B cell (primary cell): ENCODE measurements at regions of chr14 and their contacts with region 1.

Region 1: GRCh38 chr14:23089498-23090253 is 5.3 kb downstream of the ACIN1 start:
- DNase-seq: no peak
- ATAC-seq: no peak
- H3K4me3 ChIP-seq: no peak overlapping the region
- H3K4me3 Mint-ChIP-seq: no peak overlapping the region
- H3K27ac ChIP-seq: no peak overlapping the region
- H3K27ac Mint-ChIP-seq: no peak overlapping the region
- H3K4me1 ChIP-seq: peaks cover 12 to 13% of the 10 kb centered on the region in 2 donors
- H3K4me1 Mint-ChIP-seq: peaks cover 14% of the 10 kb centered on the region
- H3K27me3 ChIP-seq: no peaks in the 10 kb centered on the region
- H3K27me3 Mint-ChIP-seq: no peaks in the 10 kb centered on the region
- CTCF ChIP-seq: no peak

Region 2: DNA sequence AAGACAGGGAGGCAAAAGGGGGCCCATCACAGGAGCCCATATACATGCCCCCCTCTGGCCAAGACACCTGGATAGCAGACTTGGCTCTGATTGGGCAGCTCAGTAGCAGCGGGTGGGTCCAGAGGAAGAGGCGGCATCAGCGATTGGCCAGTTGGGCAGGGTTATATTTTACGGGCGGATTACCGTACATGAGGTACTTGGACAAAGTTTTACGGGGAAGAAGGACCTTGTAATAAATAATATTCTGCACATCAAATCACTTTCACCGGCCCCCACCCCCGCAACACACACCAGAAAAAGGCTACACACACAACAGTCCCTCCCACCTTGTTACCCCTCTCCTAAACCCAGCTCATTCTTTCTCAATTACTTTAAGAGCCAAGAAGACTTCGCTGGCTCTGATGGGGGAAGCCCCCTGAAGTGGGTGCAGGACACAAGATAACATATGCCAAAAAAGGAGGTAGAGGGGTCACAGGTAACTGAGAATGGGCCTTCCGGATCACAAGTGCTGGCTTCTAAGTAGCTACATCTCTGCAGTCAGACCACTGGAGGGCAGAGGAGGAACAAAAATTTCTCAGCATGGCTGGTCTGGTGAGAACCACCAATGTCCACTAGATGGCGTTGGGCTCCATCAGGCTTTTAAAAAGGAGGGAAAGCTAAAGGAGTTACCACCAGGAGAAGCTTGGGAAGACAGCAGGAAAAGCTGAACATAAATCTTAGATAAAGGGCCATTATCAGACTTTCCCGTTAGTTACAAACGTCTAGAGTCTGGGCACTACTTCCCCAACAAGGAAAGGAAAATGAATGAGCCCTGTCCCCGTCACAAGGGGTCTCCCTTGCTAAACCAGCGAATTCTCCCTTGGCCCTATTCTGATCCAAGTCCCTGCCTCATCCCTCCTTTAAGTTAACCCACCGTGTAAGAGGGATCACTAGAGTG is 20.9 kb before region 1 on chr14:
- CTCF ChIA-PET with region 1: interaction called, 29 read pairs
- POLR2A ChIA-PET with region 1: interaction called, 7 read pairs
- intact Hi-C with region 1: no loop called
- DNase-seq: peak; percentile 87
- ATAC-seq: peak; percentile 85
- H3K4me3 ChIP-seq: no peak overlapping the region
- H3K4me3 Mint-ChIP-seq: no peak overlapping the region
- H3K27ac ChIP-seq: peak overlapping the region; percentile 10 to 28
- H3K27ac Mint-ChIP-seq: peak overlapping the region; percentile 83
- H3K4me1 ChIP-seq: peaks cover 21 to 41% of the 10 kb centered on the region in 2 donors
- H3K4me1 Mint-ChIP-seq: peaks cover 38% of the 10 kb centered on the region
- H3K27me3 ChIP-seq: no peaks in the 10 kb centered on the region
- H3K27me3 Mint-ChIP-seq: no peaks in the 10 kb centered on the region
- CTCF ChIP-seq: peak; percentile 99

Region 3: DNA sequence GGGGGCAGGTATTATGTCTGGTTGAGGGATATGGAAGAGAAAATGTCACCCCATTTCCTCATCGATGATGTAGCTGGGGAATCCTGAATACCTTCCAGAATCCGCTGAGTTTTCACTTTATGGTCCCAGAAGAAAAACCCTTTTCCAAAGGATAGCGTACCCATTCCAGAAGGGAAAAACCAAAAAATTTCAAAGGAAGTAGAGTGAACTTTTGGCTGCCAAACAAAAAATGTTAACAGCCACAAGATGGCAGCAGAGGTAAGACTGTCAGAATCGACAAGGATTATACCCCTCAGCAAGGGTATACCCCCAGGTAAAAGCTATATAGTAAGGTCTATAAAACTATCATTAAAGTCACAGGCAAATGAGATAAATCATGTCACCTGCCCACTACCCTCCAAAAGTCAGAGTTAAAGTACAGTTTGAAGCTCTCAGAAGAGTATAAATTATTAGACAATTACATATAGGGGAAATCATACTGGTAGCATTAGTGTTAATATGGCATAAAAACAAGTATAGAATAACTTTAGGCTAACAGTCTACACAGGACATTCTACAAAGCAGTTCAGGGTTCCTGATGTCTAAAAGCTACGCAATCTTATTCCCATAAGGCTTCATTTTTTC is 12.8 kb before region 1 on chr14:
- CTCF ChIA-PET with region 1: interaction called, 28 read pairs
- POLR2A ChIA-PET with region 1: no interaction called
- intact Hi-C with region 1: loop called (anchors 2 kb)
- DNase-seq: peak; percentile 62
- ATAC-seq: peak; percentile 66
- H3K4me3 ChIP-seq: no peak overlapping the region
- H3K4me3 Mint-ChIP-seq: no peak overlapping the region
- H3K27ac ChIP-seq: no peak overlapping the region
- H3K27ac Mint-ChIP-seq: no peak overlapping the region
- H3K4me1 ChIP-seq: peaks cover 2 to 4% of the 10 kb centered on the region in 2 donors
- H3K4me1 Mint-ChIP-seq: peaks cover 9% of the 10 kb centered on the region
- H3K27me3 ChIP-seq: no peaks in the 10 kb centered on the region
- H3K27me3 Mint-ChIP-seq: no peaks in the 10 kb centered on the region
- CTCF ChIP-seq: peak; percentile 83